CD4-positive, alpha-beta T cell (primary cell): ENCODE measurements at regions of chr2 and their contacts with region 1.

Region 1: DNA sequence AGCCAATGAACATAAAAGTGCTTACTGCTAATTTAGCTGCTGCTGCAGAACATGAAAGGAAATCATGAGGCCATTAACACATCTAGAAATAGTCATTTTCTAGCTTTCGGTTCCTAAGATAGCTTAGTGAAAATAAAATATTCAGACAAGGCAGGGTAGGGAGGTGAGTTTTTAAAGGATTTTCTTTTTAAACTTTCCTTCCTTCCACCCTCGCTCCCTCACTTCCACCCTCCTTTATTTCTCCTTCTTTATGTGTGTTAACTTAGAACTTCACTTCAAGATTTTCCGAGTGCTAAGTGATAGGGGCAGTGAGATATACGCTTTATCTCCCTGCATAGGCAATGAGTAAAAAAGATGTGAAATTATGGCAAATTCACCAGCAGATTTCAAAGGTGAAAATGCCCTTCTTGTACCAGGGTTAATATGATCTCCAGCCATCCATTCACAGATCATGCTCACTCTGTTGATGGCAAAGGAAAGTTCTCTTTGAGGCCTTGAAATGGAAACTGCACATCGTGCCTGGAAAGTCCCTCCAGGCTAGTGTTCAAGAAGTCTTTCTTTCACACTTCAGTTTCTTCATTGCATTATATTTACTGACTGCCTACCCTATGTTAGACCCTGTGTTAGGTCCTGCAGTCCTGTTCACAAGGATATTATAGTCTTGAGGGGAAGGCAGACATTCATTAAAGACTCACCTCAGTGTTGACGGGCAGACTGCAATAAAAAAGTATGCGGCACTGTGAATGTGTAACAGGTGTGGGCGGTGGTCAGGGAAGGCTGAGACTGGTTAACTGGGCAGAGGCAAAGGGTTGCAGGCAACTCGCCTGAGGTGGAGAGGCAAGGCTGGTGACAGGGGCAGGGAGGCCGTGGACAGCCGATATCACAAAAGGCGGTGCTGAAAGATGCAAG is 200.8 kb downstream of the PLCL1 start:
- DNase-seq: peak in 3 of 14 experiments; percentile 44 to 66 (median 61)
- ATAC-seq: peak; percentile 79
- H3K4me3 ChIP-seq: peak overlapping the region; percentile 31
- H3K4me3 Mint-ChIP-seq: peak overlapping the region; percentile 47
- H3K27ac ChIP-seq: peak overlapping the region in 1 of 2 donors; percentile 38
- H3K27ac Mint-ChIP-seq: peak overlapping the region; percentile 83
- H3K4me1 ChIP-seq: peaks cover 3% of the 10 kb centered on the region
- H3K4me1 Mint-ChIP-seq: peaks cover 74% of the 10 kb centered on the region
- H3K27me3 ChIP-seq: no peaks in the 10 kb centered on the region
- H3K27me3 Mint-ChIP-seq: no peaks in the 10 kb centered on the region
- CTCF ChIP-seq: no peak

Region 2: GRCh38 chr2:197958592-197959150 is 46.5 kb before region 1 on chr2:
- CTCF ChIA-PET with region 1: no interaction called
- POLR2A ChIA-PET with region 1: no interaction called
- intact Hi-C with region 1: loop called in 1 of 2 experiments (anchors 5 kb)
- DNase-seq: no peak
- ATAC-seq: no peak
- H3K4me3 ChIP-seq: no peak overlapping the region
- H3K4me3 Mint-ChIP-seq: no peak overlapping the region
- H3K27ac ChIP-seq: no peak overlapping the region
- H3K27ac Mint-ChIP-seq: no peak overlapping the region
- H3K4me1 ChIP-seq: no peaks in the 10 kb centered on the region
- H3K4me1 Mint-ChIP-seq: peaks cover 75% of the 10 kb centered on the region
- H3K27me3 ChIP-seq: no peaks in the 10 kb centered on the region
- H3K27me3 Mint-ChIP-seq: no peaks in the 10 kb centered on the region
- CTCF ChIP-seq: no peak

Region 3: GRCh38 chr2:198700319-198700718 is 695.1 kb after region 1 on chr2:
- CTCF ChIA-PET with region 1: no interaction called
- POLR2A ChIA-PET with region 1: no interaction called
- intact Hi-C with region 1: no loop called
- DNase-seq: no peak
- ATAC-seq: no peak
- H3K4me3 ChIP-seq: no peak overlapping the region
- H3K4me3 Mint-ChIP-seq: no peak overlapping the region
- H3K27ac ChIP-seq: no peak overlapping the region
- H3K27ac Mint-ChIP-seq: no peak overlapping the region
- H3K4me1 ChIP-seq: no peaks in the 10 kb centered on the region
- H3K4me1 Mint-ChIP-seq: no peaks in the 10 kb centered on the region
- H3K27me3 ChIP-seq: no peaks in the 10 kb centered on the region
- H3K27me3 Mint-ChIP-seq: no peaks in the 10 kb centered on the region
- CTCF ChIP-seq: no peak